ENCODE measurements at regions of chr14 and their contacts with region 1.

Region 1: GRCh38 chr14:100239840-100240724 is 1.1 kb downstream of the YY1 start:
- DNase-seq: peak; percentile 92
- ATAC-seq: peak; percentile 30
- H3K4me3 Mint-ChIP-seq: peak overlapping the region; percentile 87
- H3K27ac Mint-ChIP-seq: peak overlapping the region; percentile 89
- H3K4me1 Mint-ChIP-seq: peaks cover 43% of the 10 kb centered on the region
- H3K27me3 Mint-ChIP-seq: no peaks in the 10 kb centered on the region

Region 2: GRCh38 chr14:100192672-100193416 is 47.2 kb before region 1 on chr14:
- POLR2A ChIA-PET with region 1: interaction called, 12 read pairs
- DNase-seq: peak; percentile 99
- ATAC-seq: peak; percentile 100
- H3K4me3 Mint-ChIP-seq: peak overlapping the region; percentile 75
- H3K27ac Mint-ChIP-seq: peak overlapping the region; percentile 93
- H3K4me1 Mint-ChIP-seq: peaks cover 8% of the 10 kb centered on the region
- H3K27me3 Mint-ChIP-seq: no peaks in the 10 kb centered on the region

Region 3: DNA sequence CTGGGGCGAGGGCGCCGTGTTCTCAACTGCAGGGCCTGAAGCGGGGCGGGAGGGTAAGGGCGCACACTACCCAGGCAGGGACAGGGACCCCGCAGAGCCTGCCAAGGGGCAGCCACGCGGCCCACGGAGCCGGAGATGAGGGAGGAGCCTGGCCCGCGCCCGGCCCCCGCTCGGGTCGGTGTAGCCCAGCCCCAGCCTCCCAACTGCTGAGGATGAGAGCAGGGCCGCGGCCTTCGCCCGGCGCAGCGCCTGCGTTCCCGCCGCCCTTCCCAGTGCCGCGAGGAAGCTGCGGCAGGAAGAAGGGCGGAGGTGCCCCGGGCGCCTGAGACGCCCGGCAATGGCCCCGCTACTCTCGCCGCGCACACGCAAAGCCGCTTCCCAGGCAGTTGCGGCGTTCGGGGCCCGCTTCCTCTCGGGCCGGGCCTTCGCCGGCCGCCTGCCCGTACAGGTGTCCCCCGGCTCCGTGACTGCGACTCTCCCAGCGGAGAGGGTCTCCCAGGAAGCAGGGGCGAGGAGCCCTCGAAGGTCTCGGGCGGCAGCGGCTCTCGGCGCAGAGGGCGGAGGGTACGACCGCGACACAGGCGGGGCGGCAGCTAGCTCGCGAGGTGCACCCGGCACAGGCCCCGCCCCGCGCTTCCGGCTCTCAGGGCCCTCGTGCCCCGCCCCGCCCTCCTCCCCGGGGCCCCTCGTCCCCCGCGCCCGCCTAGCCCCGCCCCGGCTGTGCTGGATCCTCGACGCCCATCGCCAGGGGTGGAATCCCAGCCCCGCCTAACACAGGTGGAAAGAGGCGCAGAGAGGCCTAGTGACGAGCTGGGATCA is 25.9 kb before region 1 on chr14:
- POLR2A ChIA-PET with region 1: interaction called, 32 read pairs
- DNase-seq: peak; percentile 97
- ATAC-seq: peak; percentile 94
- H3K4me3 Mint-ChIP-seq: peak overlapping the region; percentile 85
- H3K27ac Mint-ChIP-seq: peak overlapping the region; percentile 94
- H3K4me1 Mint-ChIP-seq: peaks cover 28% of the 10 kb centered on the region
- H3K27me3 Mint-ChIP-seq: no peaks in the 10 kb centered on the region

Region 4: GRCh38 chr14:100221533-100222223 is 18.4 kb before region 1 on chr14:
- POLR2A ChIA-PET with region 1: interaction called, 158 read pairs
- DNase-seq: peak; percentile 67
- ATAC-seq: peak; percentile 91
- H3K4me3 Mint-ChIP-seq: no peak overlapping the region
- H3K27ac Mint-ChIP-seq: no peak overlapping the region
- H3K4me1 Mint-ChIP-seq: peaks cover 33% of the 10 kb centered on the region
- H3K27me3 Mint-ChIP-seq: no peaks in the 10 kb centered on the region

Region 5: DNA sequence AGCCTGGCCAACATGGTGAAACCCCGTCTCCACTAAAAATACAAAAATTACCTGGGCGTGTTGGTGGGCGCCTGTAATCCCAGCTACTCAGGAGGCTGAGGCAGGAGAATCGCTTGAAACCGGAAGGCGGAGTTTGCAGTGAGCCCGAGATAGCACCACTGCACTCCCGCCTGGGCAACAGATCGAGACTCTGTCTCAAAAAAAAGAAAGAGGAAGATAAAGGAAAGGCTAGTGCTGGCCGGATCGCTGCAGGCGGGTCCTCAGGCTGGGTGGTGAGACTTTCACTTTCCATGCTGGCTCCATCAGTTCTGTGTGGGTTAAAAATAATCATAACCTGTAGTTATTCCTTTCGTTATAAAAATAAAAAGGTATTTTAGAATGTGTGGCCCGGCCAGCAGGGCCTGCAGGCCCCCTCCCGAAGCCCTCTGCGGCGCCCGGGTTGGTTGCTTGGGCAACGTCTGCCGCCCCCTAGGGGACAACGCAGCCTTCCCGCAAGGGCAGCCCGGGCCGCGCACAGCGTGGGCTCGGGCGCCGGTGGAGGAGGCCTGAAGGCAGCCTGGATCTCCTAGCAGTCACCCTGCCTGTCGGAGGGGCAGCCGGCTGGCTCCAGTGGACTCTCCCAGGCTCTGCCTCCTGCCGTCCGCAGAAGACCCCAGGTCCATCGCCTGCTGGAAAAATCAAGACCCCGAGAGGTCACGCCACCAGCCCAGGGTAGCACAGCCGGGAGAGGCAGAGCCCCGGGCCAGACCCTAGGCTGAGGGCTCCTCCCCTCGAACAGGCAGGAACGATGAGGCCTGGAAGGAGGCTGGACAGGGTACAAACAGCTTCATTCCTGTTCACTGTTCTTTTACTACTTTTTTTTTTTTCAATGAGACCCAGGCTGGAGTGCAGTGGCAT is 78.1 kb after region 1 on chr14:
- POLR2A ChIA-PET with region 1: no interaction called
- DNase-seq: peak; percentile 83
- ATAC-seq: peak; percentile 95
- H3K4me3 Mint-ChIP-seq: peak overlapping the region; percentile 78
- H3K27ac Mint-ChIP-seq: peak overlapping the region; percentile 68
- H3K4me1 Mint-ChIP-seq: peaks cover 7% of the 10 kb centered on the region
- H3K27me3 Mint-ChIP-seq: no peaks in the 10 kb centered on the region

Region 6: DNA sequence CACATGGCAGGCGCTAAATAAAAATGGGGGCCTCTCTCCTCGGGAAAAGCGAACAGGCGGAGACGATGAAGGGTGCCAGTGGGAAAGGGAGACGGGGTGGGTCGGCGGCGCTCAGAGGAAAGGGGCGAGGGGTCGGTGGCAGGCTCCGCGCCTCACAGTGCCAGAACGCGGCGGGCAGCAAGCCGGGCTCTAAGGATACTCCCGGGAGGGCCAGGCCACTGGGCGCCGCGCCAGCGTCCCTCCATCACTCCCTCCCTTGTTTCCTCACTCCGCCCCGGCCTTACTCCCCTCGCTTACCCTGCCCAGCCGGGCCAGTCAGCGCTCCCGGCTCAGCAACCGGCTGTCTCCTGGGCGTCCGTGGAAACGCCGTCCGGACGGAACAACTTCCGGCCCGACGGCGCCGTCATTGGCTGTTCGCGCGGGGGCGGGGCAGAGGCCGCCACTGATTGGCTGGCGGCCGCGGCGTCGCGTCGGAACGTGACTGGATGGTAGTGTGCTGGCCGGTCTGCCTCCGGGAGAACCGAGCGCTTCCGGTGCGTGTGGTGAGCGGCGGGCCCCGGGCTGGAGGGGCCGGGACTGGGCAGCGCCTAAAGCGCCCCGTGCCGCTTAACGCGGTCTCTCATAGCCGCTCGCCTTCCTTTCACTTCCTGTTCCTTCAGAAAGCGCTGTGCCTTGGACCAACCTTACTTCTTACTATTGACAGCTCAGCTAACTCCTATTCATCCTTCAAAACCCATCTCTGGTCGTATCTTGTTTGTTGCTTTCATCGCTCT is 136.1 kb after region 1 on chr14:
- POLR2A ChIA-PET with region 1: interaction called, 11 read pairs
- DNase-seq: peak; percentile 97
- ATAC-seq: peak; percentile 78
- H3K4me3 Mint-ChIP-seq: peak within 1 kb of the TSS; percentile 88
- H3K27ac Mint-ChIP-seq: peak within 1 kb of the TSS; percentile 92
- H3K4me1 Mint-ChIP-seq: peaks cover 41% of the 10 kb centered on the region
- H3K27me3 Mint-ChIP-seq: no peaks in the 10 kb centered on the region